Activated T-helper 1 cell treated with anti-CD3 and anti-CD28 coated beads, Interleukin-12 subunit alpha, Interleukin-12 subunit beta, Interleukin-2, Interleukin-4 antibody, amounts not matched to agents 30 ng/mL and 10 ng/mL and 1 ng/mL, durations not matched to agents 14 hours and 24 hours and 36 hours (primary cell): ENCODE measurements at regions of chr18 and their contacts with region 1.

Region 1: DNA sequence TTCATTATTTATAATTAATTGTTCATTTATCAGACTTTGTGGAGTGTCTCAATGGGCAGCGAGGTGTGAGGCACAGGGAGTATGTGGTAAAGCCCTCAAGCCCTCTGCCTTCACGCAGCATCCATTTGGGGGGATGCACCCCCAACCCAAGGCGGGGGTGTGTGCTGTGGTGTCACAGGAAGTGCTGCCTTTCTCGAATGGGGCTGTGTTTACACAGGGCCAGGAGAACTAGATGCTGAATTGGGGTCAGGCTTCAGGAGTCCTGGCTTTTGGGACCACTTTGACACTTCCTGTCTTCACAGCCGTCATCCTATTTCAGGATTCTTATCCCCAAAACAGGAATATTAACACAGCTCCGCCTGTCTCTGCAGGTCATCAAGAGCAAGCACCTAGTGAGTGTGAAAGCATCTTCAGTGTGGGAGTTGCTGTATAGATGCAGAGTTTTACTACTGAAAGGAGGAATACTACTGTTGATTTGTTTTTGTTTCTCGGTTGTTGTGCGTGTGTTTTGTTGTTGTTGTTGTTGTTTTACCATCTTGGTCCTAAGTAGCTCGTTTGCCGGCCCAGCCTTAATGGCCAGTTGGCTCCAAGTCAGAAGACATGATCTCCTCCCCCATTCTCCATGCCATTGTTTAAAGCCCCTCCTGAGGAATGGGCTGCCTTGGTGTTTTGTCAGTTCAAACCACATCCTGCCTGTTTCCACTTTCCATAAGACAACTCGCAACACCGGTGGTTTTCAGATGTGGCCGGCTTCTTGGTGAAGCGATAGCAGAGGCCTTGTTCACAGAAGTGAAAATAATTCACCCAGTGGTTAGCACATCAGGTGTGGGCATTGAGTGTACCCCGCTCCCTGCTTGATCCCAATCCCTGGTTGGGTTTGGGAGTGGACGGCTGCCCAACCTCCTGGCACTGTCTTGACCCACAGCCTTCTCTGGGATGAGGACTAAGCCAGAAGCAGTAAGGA is 221.3 kb downstream of the BCL2 start:
- DNase-seq: peak; percentile 63
- H3K4me3 Mint-ChIP-seq: peak overlapping the region; percentile 24
- H3K27ac Mint-ChIP-seq: peak overlapping the region; percentile 78
- H3K4me1 Mint-ChIP-seq: peaks cover 52% of the 10 kb centered on the region
- H3K27me3 Mint-ChIP-seq: peaks cover 53% of the 10 kb centered on the region

Region 2: GRCh38 chr18:62883937-62884735 is 214.2 kb before region 1 on chr18:
- intact Hi-C with region 1: no loop called
- DNase-seq: no peak
- H3K4me3 Mint-ChIP-seq: no peak overlapping the region
- H3K27ac Mint-ChIP-seq: no peak overlapping the region
- H3K4me1 Mint-ChIP-seq: peaks cover 21% of the 10 kb centered on the region
- H3K27me3 Mint-ChIP-seq: no peaks in the 10 kb centered on the region

Region 3: GRCh38 chr18:62963507-62963906 is 134.8 kb before region 1 on chr18:
- intact Hi-C with region 1: no loop called
- DNase-seq: no peak
- H3K4me3 Mint-ChIP-seq: no peak overlapping the region
- H3K27ac Mint-ChIP-seq: no peak overlapping the region
- H3K4me1 Mint-ChIP-seq: no peaks in the 10 kb centered on the region
- H3K27me3 Mint-ChIP-seq: no peaks in the 10 kb centered on the region

Region 4: DNA sequence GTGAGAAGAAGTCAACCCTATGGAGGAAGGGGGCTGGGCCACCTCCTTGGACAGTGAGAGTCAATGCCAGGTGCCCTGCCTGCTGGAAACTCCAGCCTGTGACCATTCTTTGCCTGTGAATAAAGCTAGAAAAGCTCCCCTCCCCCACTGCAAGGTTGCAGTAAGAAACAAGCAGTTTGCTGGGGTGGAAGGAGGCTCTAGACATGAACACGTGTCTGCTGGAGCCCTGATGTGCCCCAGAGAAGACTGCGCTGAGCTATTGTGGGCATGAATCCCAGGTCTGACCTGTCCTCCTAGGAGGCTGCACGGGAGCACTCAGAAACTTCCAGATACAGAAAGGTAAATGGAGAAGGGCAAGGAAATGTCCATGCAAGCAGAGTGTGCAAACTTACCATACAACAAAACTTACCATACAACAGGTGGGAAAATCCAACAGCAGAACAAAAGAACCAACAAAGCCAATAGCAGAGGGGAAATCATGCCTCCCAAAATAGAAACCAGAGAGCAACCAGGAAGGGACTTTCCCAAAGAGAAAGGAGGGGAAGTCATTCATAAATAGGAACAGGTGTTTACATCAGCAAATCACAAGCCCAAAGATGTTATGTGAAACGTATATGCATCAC is 57.4 kb before region 1 on chr18:
- intact Hi-C with region 1: loop called (anchors 2 kb)
- DNase-seq: no peak
- H3K4me3 Mint-ChIP-seq: peak overlapping the region; percentile 38
- H3K27ac Mint-ChIP-seq: peak overlapping the region; percentile 41
- H3K4me1 Mint-ChIP-seq: peaks cover 29% of the 10 kb centered on the region
- H3K27me3 Mint-ChIP-seq: peaks cover 23% of the 10 kb centered on the region